Mammary epithelial cell (primary cell): ENCODE measurements at regions of chr19 and their contacts with region 1.

Region 1: GRCh38 chr19:10332955-10333757 is at the start of gene RAVER1:
- DNase-seq: peak; percentile 96
- H3K4me3 ChIP-seq: peak within 1 kb of the TSS; percentile 50 to 97 (median 74)
- H3K27ac ChIP-seq: peak within 1 kb of the TSS; percentile 63
- H3K4me1 ChIP-seq: peaks cover 16% of the 10 kb centered on the region
- H3K27me3 ChIP-seq: no peaks in the 10 kb centered on the region
- CTCF ChIP-seq: no peak
- total RNA-seq, gene RAVER1: 8.3 to 43.0 TPM

Region 2: DNA sequence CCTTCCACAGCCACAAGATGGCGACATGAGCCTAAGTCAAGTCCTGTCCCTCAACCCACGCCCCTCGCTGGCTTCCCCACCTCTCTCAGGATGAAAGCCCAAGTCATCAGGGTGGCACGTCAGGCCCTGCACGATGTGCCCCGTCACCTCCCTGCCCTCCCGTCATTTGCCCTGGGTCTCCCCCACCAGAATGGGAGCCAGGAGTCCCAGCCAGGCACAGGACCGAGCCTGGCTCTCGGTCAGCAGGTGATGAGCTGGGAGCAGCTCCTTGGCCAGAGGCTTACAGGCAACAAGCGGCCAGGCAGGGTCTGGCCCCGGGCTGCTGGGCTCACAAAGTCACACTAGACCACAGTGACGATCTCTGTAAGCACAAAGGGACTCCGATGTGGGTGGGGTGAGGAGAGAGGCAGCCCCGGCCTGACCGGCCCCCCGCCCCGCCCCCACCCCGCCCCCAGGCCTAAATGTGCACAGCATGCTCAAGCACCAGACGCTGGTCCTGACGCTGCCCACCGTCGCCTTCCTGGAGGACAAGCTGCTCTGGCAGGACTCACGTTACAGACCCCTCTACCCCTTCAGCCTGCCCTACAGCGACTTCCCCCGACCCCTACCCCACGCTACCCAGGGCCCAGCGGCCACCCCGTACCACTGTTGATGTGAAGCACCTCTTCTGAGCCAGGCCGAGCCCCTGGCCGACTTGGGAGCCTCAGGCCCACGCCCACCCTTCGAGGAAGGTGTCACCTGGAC is 73.8 kb before region 1 on chr19:
- CTCF ChIA-PET with region 1: interaction called, 11 read pairs
- dilution Hi-C with region 1: no loop called
- in situ Hi-C with region 1: no loop called
- intact Hi-C with region 1: no loop called
- DNase-seq: peak; percentile 76
- H3K4me3 ChIP-seq: peak overlapping the region in 1 of 3 experiments; percentile 17
- H3K27ac ChIP-seq: peak overlapping the region; percentile 45
- H3K4me1 ChIP-seq: peaks cover 23% of the 10 kb centered on the region
- H3K27me3 ChIP-seq: no peaks in the 10 kb centered on the region
- CTCF ChIP-seq: peak; percentile 72 to 77

Region 3: DNA sequence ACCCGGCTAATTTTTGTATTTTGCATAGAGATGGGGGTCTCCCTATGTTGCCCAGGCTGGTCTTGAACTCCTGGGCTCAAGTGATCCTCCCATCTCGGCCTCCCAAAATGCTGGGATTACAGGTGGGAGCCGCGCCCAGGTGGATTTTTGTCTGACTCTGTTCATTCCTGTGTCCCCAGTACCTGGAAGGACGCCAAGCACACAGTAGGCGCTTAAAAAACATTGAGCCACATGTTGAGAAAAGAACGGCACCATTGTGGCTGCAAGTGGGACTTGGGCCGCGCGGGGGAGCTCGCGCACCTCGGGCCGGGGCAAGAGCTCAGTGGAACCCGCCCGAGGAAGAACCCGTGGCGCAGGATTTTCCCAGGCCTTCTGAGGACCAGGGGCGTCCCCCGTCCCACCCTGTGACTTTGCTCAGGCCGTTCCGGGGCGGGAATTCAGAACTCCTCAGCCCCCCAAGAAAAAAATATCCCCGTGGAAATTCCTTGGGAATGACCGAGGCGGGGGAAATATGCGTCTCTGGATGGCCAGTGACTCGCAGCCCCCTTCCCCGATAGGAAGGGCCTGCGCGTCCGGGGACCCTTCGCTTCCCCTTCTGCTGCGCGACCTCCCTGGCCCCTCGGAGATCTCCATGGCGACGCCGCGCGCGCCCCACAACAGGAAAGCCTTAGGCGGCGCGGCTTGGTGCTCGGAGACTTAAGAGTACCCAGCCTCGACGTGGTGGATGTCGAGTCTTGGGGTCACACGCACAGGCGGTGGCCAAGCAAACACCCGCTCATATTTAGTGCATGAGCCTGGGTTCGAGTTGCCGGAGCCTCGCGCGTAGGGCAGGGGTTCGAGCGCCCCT is 63.6 kb before region 1 on chr19:
- CTCF ChIA-PET with region 1: interaction called, 6 read pairs
- dilution Hi-C with region 1: no loop called
- in situ Hi-C with region 1: no loop called
- intact Hi-C with region 1: loop called (anchors 1 kb)
- DNase-seq: peak; percentile 54
- H3K4me3 ChIP-seq: peak overlapping the region in 1 of 3 experiments; percentile 33
- H3K27ac ChIP-seq: no peak overlapping the region
- H3K4me1 ChIP-seq: peaks cover 16% of the 10 kb centered on the region
- H3K27me3 ChIP-seq: no peaks in the 10 kb centered on the region
- CTCF ChIP-seq: peak; percentile 80 to 96

Region 4: GRCh38 chr19:10292206-10292788 is 40.9 kb before region 1 on chr19:
- CTCF ChIA-PET with region 1: no interaction called
- dilution Hi-C with region 1: loop called (anchors 5 kb)
- in situ Hi-C with region 1: no loop called
- intact Hi-C with region 1: loop called (anchors 2 kb)
- DNase-seq: peak; percentile 36
- H3K4me3 ChIP-seq: peak overlapping the region; percentile 45 to 51 (median 50)
- H3K27ac ChIP-seq: no peak overlapping the region
- H3K4me1 ChIP-seq: peaks cover 31% of the 10 kb centered on the region
- H3K27me3 ChIP-seq: no peaks in the 10 kb centered on the region
- CTCF ChIP-seq: no peak

Region 5: DNA sequence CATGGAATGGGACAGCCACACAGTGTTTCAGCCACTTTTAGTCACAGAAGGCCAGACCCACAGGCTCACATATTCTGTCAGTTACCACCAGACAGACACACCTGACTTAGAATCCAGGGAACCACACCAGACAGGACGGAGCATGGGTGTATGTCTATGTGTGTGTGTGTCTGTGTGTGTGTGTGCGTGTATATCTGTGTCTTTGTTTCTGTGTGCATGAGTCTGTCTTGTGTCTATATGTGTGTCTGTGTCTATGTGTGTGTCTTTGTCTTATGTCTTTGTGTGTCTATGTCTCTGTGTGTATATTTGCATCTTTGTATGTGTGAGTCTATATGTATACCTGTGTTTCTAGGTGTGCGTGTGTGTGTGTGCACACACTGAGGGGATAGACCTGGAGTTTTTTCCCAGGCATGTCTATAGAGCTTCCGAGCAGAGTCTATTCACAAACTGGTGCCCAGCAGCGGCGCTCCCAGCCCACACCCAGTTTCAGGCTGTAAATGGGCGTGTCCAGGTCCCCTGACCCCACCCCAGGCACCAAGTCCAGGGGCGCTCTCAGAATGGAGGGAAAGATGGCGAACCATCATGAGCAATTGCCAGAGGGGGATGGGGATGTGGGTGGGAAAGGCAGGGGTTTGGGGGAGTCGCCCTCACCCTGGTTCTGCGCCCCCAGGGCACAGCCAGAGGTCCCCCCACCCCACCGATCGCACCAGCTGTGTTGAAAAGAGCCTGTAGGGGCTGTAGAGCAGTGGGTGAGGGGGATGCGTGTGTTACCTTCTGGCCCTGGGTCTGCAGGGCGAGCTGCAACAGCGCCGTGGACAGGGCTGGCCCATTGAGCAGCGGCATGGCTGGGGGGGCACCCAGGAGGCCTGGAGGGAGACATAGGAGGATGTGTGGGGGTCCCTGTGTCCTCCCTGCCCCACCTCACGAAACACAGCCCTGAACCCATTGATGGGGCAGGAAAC is 11.0 kb before region 1 on chr19:
- CTCF ChIA-PET with region 1: interaction called, 26 read pairs
- dilution Hi-C with region 1: no loop called
- in situ Hi-C with region 1: no loop called
- intact Hi-C with region 1: no loop called
- DNase-seq: no peak
- H3K4me3 ChIP-seq: no peak overlapping the region
- H3K27ac ChIP-seq: no peak overlapping the region
- H3K4me1 ChIP-seq: no peaks in the 10 kb centered on the region
- H3K27me3 ChIP-seq: no peaks in the 10 kb centered on the region
- CTCF ChIP-seq: no peak

Region 6: GRCh38 chr19:10380313-10381102 is 47.4 kb after region 1 on chr19 and contains the start of gene TYK2:
- CTCF ChIA-PET with region 1: no interaction called
- dilution Hi-C with region 1: no loop called
- in situ Hi-C with region 1: no loop called
- intact Hi-C with region 1: loop called (anchors 1 kb)
- DNase-seq: peak; percentile 99
- H3K4me3 ChIP-seq: peak within 1 kb of the TSS; percentile 81 to 99 (median 92)
- H3K27ac ChIP-seq: peak within 1 kb of the TSS; percentile 65
- H3K4me1 ChIP-seq: peaks cover 11% of the 10 kb centered on the region
- H3K27me3 ChIP-seq: no peaks in the 10 kb centered on the region
- CTCF ChIP-seq: no peak
- total RNA-seq, gene TYK2: 43.5 to 110 TPM